RWPE1 (cell line): ENCODE measurements at regions of chr19 and their contacts with region 1.

Region 1: DNA sequence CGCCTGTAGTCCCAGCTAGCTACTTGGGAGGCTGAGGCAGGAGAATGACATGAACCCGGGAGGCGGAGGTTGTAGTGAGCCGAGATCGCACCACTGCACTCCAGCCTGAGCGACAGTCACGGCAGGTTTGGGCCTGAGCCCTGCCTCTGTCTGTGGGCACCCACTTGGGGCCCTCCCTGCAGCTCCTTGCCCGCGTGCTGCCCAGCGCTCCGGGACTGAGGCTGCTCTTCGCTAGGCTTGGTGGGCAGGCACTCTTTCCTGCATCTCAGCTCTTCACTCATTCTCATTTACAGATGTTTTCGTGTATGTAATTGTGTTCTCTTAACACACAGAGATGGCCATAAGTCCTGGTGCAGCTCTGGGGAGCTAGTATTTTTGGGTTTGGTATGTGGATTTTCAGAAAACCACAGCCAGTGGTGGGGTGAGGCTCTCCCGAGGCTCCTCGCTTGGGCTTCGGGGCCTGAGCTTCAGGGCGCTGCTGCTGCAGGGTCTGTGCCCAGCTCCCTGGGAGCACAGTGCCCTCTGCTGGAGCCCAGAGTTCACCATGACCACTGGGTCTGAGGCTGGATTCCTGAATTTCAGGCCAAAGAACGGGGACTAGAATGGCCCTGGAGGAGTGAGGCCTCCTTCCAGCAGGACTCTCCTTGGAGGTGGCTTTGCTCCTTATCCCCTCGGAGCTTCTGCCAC is 15.2 kb downstream of the UPF1 start:
- DNase-seq: peak; percentile 67
- H3K27ac ChIP-seq: peak overlapping the region; percentile 57
- CTCF ChIP-seq: peak; percentile 94

Region 2: GRCh38 chr19:18594096-18594823 is 252.7 kb before region 1 on chr19:
- CTCF ChIA-PET with region 1: interaction called, 10 read pairs
- POLR2A ChIA-PET with region 1: interaction called, 3 read pairs
- DNase-seq: peak; percentile 76
- H3K27ac ChIP-seq: peak overlapping the region; percentile 96
- CTCF ChIP-seq: peak; percentile 98

Region 3: DNA sequence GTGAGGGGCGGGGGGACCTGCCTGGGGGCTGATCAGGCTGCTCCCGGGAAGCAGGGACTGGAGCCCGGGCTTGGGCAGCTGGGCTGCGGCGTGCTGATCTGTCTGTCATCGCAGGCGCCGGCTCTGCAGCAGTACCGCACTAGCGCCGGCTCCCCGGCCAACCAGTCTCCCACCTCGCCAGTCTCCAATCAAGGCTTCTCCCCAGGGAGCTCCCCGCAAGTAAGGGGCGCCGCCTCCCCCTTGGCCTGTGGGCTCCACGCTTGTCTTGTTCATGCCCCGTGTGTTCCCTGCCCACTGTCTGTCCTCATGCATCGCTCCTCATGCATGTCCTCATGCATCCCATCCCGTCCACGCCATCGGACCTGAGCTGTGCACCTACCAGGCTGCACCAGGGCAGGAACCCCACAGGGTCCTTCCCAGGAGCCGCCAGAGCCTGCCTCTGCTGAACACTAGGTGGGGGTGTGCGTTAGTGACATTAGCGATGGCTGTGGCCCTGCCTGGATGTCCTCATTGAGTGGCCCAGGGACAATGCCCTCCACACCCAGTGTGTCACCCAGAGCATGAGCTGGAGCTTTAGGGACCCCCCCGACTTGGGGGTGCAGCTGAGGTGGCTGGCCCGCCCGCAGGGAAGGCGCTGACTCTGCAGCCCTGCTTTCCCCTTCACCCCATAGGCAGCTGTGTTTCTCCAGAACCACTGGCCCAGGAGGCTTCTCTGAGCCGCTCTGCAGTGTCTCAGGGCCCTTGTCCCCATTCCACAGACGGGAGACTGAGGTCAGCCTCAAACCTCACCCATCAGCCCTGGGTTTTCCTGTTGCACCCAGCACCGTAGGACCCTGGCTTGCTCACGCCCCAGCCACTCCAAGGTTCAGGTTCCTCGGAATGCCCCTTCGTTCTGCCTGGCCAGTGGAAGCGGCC is 75.4 kb before region 1 on chr19:
- CTCF ChIA-PET with region 1: interaction called, 24 read pairs
- POLR2A ChIA-PET with region 1: no interaction called
- DNase-seq: no peak
- H3K27ac ChIP-seq: peak overlapping the region; percentile 58; the same call in 1 of the 2 replicates
- CTCF ChIP-seq: no peak